OCI-LY7 (cell line): ENCODE measurements at regions of chr3 and their contacts with region 1.

Region 1: GRCh38 chr3:71022551-71023335 is 560.8 kb downstream of the FOXP1 start:
- DNase-seq: no peak
- H3K4me3 ChIP-seq: no peak overlapping the region
- H3K27ac ChIP-seq: no peak overlapping the region
- H3K4me1 ChIP-seq: no peaks in the 10 kb centered on the region
- CTCF ChIP-seq: peak; percentile 50

Region 2: GRCh38 chr3:70951316-70951715 is 71.4 kb before region 1 on chr3:
- CTCF ChIA-PET with region 1: no interaction called
- POLR2A ChIA-PET with region 1: no interaction called
- intact Hi-C with region 1: no loop called
- DNase-seq: no peak
- H3K4me3 ChIP-seq: no peak overlapping the region
- H3K27ac ChIP-seq: no peak overlapping the region
- H3K4me1 ChIP-seq: no peaks in the 10 kb centered on the region
- CTCF ChIP-seq: no peak

Region 3: DNA sequence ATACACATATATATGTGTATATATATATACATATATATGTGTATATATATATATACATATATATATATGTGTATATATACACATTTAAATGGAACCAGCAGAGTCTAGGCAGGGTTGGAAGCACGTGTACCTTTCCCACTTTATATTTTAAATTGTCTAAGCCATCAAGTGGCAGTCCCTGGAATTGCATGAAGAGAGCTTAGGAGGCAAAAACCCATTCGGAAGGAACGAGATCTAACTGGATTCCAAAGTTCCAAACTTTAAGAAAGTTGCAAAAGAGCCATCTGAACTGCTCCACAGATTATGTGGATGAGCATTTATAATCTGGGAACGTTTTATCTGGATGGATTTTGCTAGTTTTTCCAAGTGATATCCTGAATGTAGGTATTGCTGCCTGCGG is 374.3 kb after region 1 on chr3:
- CTCF ChIA-PET with region 1: no interaction called
- POLR2A ChIA-PET with region 1: interaction called, 13 read pairs
- intact Hi-C with region 1: no loop called
- DNase-seq: peak; percentile 42
- H3K4me3 ChIP-seq: no peak overlapping the region
- H3K27ac ChIP-seq: no peak overlapping the region
- H3K4me1 ChIP-seq: peaks cover 66% of the 10 kb centered on the region
- CTCF ChIP-seq: peak; percentile 69